Breast epithelium (tissue), 4 donors: ENCODE measurements at regions of chr4 and their contacts with region 1.

Region 1: DNA sequence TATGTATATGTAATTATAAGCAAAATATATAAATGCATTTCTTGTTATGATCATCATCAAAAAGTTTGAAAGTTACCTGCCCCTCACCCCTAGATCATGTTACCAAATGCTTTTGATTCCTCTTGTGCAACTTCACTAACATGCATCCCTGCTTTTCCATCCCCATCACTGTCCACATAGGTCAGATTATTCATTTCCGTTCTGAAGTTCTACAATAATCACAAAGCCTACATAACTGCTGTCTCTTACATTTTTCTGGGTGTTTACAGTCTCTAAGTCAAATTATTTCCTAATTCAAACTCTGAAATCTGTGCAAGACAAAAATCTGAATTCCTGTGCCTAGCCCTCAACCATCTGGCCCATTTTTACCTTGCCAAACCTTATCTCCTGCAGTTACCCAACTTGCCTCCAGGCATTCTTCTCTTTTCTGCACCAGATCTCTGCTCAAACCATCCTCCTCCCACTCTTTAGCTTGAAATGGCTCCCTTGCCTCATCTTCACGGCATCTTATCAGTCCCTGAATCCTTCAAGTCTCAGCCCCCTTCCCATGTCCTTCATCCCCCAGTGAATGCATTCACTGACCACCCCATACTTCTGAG is 42.4 kb upstream of the SLC39A8 start:
- DNase-seq: no peak
- H3K4me3 ChIP-seq: no peak overlapping the region
- H3K27ac ChIP-seq: no peak overlapping the region
- H3K4me1 ChIP-seq: no peaks in the 10 kb centered on the region
- H3K27me3 ChIP-seq: no peaks in the 10 kb centered on the region
- CTCF ChIP-seq: no peak
- POLR2A ChIP-seq: no peak

Region 2: GRCh38 chr4:101643186-101643837 is 744.3 kb before region 1 on chr4:
- intact Hi-C with region 1: no loop called
- DNase-seq: no peak
- H3K4me3 ChIP-seq: no peak overlapping the region
- H3K27ac ChIP-seq: peak overlapping the region in 1 of 2 donors; percentile 16
- H3K4me1 ChIP-seq: no peaks in the 10 kb centered on the region
- H3K27me3 ChIP-seq: no peaks in the 10 kb centered on the region
- CTCF ChIP-seq: no peak
- POLR2A ChIP-seq: no peak

Region 3: GRCh38 chr4:101967697-101968368 is 419.8 kb before region 1 on chr4:
- intact Hi-C with region 1: loop called (anchors 5 kb)
- DNase-seq: no peak
- H3K4me3 ChIP-seq: no peak overlapping the region
- H3K27ac ChIP-seq: no peak overlapping the region
- H3K4me1 ChIP-seq: no peaks in the 10 kb centered on the region
- H3K27me3 ChIP-seq: no peaks in the 10 kb centered on the region
- CTCF ChIP-seq: no peak
- POLR2A ChIP-seq: no peak

Region 4: GRCh38 chr4:102076622-102077021 is 311.0 kb before region 1 on chr4:
- intact Hi-C with region 1: no loop called
- DNase-seq: no peak
- H3K4me3 ChIP-seq: no peak overlapping the region
- H3K27ac ChIP-seq: no peak overlapping the region
- H3K4me1 ChIP-seq: no peaks in the 10 kb centered on the region
- H3K27me3 ChIP-seq: no peaks in the 10 kb centered on the region
- CTCF ChIP-seq: no peak
- POLR2A ChIP-seq: no peak

Region 5: GRCh38 chr4:102344954-102345794 is 42.5 kb before region 1 on chr4 and contains the start of gene SLC39A8:
- intact Hi-C with region 1: no loop called
- DNase-seq: peak; percentile 75 to 84
- H3K4me3 ChIP-seq: peak within 1 kb of the TSS; percentile 61 to 80 (median 65)
- H3K27ac ChIP-seq: peak within 1 kb of the TSS; percentile 82 to 88
- H3K4me1 ChIP-seq: no peaks in the 10 kb centered on the region
- H3K27me3 ChIP-seq: no peaks in the 10 kb centered on the region
- CTCF ChIP-seq: peak; percentile 56 to 84 (median 66)
- POLR2A ChIP-seq: peak; percentile 48
- total RNA-seq, gene SLC39A8: 10.6 to 66.3 (median 31.8) TPM